ENCODE measurements at regions of chr9 and their contacts with region 1.

Region 1: DNA sequence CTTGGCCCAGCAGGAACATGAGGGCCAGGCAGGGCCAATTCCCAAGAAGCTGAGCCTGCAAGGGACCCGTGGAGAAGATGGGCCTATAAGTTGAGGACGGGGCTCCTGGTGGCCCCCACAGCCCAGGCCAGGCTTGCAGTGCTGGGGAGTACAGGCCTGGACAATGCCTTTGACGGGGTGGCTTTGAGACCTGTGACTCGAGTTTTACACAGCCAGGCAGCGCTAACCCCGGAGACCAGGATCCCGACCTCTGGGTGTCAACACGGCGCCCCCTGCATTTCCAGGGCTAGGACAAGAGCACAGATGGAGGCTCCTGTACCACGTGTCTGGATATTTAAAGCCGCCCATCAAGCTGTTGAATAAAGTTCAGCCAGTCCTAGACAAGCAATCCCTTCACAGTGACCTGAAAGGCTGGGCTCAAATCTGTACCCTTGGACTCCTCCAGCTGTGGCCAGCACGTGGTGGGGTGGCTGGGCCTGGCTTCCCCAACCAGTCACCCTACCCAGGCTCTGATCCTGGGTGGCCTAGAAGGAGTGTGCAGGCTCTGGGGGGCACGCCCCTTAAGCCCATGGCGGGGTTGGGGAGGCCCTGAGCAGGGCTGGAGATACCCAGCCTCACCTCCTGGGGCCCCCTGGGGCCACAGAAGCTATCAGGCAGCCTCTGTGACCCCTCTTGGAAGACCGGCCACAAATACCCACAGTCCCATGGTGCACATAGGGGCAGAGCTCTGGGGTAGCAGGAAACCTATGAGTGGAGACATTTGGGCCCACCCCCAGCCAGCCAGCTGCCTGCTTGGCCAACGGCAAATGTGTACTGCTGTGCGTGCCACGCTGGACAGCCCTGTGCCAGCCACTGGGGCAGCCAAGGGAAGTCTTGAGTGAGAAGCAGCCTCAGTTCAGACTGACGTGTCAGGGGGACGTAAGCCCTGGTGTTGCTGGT is 88.7 kb downstream of the NTNG2 start:
- DNase-seq: peak; percentile 1
- ATAC-seq: no peak

Region 2: GRCh38 chr9:131762356-131762932 is 488.1 kb before region 1 on chr9:
- intact Hi-C with region 1: loop called in 1 of 2 experiments (anchors 5 kb)
- DNase-seq: peak; percentile 80
- ATAC-seq: peak; percentile 93 to 96

Region 3: DNA sequence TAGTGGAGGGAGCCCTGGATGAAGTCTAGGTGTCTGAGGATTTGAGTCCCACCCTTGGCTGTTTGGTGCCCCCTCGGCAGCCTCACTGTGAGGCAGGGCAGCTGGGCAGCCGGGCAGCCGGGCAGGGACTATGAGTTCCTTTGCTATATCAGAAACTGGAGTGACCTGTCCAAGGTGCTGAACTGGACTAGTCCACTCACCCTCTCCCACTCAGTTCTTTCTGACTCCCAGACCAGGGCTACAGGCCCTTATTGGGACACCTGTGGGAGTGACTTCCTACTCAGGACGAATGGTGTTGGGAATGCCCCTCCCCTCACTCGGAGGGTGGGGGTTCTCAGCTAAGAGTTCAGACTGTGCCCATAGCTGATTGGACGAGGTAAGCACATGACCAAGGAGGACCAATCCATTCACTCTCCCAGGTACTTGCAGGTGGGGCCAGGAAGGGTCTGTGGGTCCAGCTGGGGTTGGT is 476.6 kb before region 1 on chr9:
- intact Hi-C with region 1: loop called in 1 of 2 experiments (anchors 5 kb)
- DNase-seq: peak; percentile 55
- ATAC-seq: peak; percentile 70 to 88